ENCODE measurements at regions of chr12 and their contacts with region 1.

Region 1: DNA sequence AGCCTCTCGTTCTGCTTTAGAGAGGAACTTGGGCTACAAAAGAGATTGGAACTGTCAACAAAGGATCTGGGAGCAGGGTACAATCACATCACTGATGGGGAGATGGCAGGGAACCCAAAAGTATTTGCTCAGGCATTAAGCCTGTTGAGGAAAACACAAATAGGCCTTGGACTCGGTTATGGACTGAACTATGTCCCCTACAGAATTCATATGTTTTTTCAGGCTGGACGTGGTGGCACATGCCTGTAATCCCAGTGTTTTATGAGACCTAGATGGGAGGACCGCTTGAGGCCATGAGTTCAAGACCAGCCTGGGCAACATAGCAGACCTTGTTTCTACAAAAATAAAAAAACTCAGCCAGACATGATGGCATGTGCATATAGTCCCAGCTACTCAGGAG is 13.9 kb downstream of the DDX23 start:
- DNase-seq: no peak
- H3K4me3 ChIP-seq: no peak overlapping the region
- H3K27ac ChIP-seq: no peak overlapping the region
- H3K4me1 ChIP-seq: no peaks in the 10 kb centered on the region
- H3K27me3 ChIP-seq: no peaks in the 10 kb centered on the region
- CTCF ChIP-seq: no peak
- EP300 ChIP-seq: no peak
- POLR2A ChIP-seq: no peak
- RAD21 ChIP-seq: no peak

Region 2: DNA sequence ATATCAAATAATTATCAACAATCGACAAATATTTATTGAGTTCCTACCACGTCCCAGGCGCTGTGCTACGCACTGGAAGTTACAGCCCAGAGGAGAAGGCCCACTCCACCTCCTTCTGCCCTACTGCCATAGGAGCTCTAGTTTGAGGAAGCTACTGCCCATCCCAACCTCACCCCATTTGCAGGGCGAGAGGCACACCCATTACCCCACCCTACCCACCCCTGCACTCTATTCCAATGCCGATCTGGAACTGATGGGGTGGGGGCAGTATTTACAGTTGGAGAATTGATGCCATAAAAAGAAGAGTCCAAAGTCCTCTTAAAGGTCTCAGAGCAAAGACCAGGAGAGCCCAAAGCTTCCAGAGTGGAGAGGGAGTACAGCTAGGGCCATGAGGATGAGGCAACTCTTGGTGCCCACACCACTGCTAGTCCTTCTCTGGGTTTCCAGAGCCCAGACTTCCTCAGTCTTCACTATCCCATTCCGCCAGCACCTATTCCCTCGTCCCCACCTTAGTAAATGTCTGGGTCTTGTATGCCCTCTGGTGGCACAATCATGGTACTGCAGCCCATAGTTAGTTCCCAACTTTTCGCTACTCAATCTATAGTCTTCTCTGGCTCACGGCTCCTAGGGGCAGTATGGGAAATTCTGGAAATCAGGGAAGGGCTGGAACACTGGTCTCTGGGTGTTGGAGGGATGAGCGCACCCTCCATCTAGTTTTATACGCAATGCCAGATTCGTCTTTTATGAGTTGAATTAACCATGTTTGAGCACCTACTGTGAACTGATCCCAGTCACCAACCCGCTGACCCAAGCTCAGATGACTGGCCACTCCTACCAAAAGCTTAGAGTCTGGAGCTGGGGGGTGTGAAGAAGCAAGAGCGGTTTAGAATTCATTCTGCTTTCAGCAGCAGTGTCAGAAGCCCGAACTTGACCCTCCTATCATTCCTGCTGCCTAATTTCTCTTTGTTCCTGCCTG is 42.3 kb before region 1 on chr12:
- CTCF ChIA-PET with region 1: no interaction called
- POLR2A ChIA-PET with region 1: no interaction called
- DNase-seq: peak in 1 of 2 experiments; percentile 90
- H3K4me3 ChIP-seq: no peak overlapping the region
- H3K27ac ChIP-seq: no peak overlapping the region
- H3K4me1 ChIP-seq: no peaks in the 10 kb centered on the region
- H3K27me3 ChIP-seq: no peaks in the 10 kb centered on the region
- CTCF ChIP-seq: peak; percentile 70 to 99 (median 95)
- EP300 ChIP-seq: no peak
- POLR2A ChIP-seq: no peak
- RAD21 ChIP-seq: peak; percentile 99 to 100

Region 3: DNA sequence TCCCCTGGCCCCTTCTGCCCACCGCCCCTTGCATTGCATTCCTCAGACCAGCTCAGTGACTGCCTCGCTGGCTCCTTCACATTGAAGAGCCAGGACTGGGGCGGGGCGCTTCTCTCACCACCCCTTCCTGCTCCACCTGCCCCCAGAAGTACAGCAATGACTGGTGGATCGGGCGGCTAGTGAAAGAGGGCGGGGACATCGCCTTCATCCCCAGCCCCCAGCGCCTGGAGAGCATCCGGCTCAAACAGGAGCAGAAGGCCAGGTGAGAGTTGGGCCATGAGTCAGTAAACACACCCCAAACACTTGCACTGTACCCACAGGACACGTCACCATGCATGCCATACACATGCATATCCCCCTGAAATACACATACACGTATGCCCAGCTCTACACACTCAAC is 13.9 kb before region 1 on chr12:
- CTCF ChIA-PET with region 1: interaction called, 7 read pairs
- POLR2A ChIA-PET with region 1: interaction called, 11 read pairs
- DNase-seq: no peak
- H3K4me3 ChIP-seq: no peak overlapping the region
- H3K27ac ChIP-seq: no peak overlapping the region
- H3K4me1 ChIP-seq: peaks cover 0 to 13% (median 7%) of the 10 kb centered on the region in 4 experiments; a peak in 4 of 7 replicates
- H3K27me3 ChIP-seq: peaks cover 0 to 13% (median 6%) of the 10 kb centered on the region in 4 experiments; a peak in 5 of 7 replicates
- CTCF ChIP-seq: no peak
- EP300 ChIP-seq: no peak
- POLR2A ChIP-seq: no peak
- RAD21 ChIP-seq: no peak

Measured in H1 (cell line).